Mammary epithelial cell (primary cell): ENCODE measurements at regions of chr1 and their contacts with region 1.

Region 1: DNA sequence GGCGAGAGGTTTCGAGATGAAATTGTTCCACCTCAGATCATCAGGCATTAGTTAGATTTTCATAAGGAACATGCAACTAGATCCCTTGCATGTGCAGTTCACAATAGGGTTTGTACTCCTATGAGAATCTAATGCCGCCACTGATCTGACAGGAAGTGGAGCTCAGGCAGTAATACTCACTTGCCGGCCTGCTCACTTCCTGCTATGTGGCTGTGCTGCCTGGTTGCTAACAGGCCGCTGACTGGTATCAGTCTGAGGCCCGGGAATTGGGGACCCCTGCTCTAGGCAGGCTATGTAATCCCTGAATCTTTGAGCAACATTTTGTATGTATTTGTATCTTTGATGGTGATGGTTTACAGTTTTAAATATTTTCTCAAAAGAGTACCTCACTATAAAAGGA is 32.5 kb downstream of the XKR8 start:
- DNase-seq: no peak
- H3K4me3 ChIP-seq: no peak overlapping the region
- H3K27ac ChIP-seq: no peak overlapping the region
- H3K4me1 ChIP-seq: no peaks in the 10 kb centered on the region
- H3K27me3 ChIP-seq: no peaks in the 10 kb centered on the region
- CTCF ChIP-seq: no peak

Region 2: DNA sequence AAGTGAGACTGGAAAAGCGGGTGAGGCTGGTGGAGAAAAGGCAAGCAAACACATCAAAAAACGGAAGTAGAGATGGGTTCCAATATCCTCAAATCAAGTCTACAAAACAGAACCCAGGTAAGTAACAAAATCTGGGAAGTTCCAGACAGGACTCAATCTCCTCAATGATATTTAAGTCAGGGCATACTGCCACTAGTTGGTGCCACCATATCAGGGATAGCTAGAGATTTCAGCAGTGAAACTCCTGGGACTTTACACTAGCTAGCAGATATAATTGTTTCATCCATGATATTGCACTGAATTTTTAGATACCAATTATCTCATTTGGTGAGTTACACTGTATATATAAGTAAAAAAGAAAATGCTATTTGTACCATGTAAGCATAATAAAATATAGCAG is 44.2 kb after region 1 on chr1:
- CTCF ChIA-PET with region 1: no interaction called
- dilution Hi-C with region 1: loop called (anchors 5 kb)
- in situ Hi-C with region 1: no loop called
- intact Hi-C with region 1: no loop called
- DNase-seq: no peak
- H3K4me3 ChIP-seq: no peak overlapping the region
- H3K27ac ChIP-seq: no peak overlapping the region
- H3K4me1 ChIP-seq: no peaks in the 10 kb centered on the region
- H3K27me3 ChIP-seq: no peaks in the 10 kb centered on the region
- CTCF ChIP-seq: peak in 1 of 2 donors; percentile 38

Region 3: GRCh38 chr1:28190337-28190979 is 198.2 kb after region 1 on chr1:
- CTCF ChIA-PET with region 1: no interaction called
- dilution Hi-C with region 1: no loop called
- in situ Hi-C with region 1: no loop called
- intact Hi-C with region 1: no loop called
- DNase-seq: no peak
- H3K4me3 ChIP-seq: no peak overlapping the region
- H3K27ac ChIP-seq: no peak overlapping the region
- H3K4me1 ChIP-seq: peaks cover 26% of the 10 kb centered on the region
- H3K27me3 ChIP-seq: no peaks in the 10 kb centered on the region
- CTCF ChIP-seq: no peak

Region 4: DNA sequence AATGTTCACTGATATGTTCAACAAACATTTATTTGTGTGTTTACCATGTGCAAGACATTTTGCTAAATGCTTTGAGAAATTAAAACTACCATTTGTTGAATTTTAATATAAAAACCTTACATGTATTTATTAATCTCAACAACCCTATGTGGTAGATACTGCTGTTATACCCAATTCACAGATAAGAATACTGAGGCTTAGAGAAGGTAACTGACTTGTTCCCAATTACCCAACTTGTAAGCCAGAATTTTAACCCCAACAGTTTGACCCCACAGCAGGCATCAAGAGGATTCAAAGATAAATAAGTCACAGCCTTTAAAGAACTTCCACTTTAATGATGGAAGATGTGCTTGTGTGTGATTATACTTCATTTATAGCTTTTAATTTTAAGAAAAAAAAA is 236.8 kb after region 1 on chr1:
- CTCF ChIA-PET with region 1: no interaction called
- dilution Hi-C with region 1: loop called (anchors 5 kb)
- in situ Hi-C with region 1: no loop called
- intact Hi-C with region 1: no loop called
- DNase-seq: no peak
- H3K4me3 ChIP-seq: no peak overlapping the region
- H3K27ac ChIP-seq: no peak overlapping the region
- H3K4me1 ChIP-seq: no peaks in the 10 kb centered on the region
- H3K27me3 ChIP-seq: no peaks in the 10 kb centered on the region
- CTCF ChIP-seq: no peak

Region 5: DNA sequence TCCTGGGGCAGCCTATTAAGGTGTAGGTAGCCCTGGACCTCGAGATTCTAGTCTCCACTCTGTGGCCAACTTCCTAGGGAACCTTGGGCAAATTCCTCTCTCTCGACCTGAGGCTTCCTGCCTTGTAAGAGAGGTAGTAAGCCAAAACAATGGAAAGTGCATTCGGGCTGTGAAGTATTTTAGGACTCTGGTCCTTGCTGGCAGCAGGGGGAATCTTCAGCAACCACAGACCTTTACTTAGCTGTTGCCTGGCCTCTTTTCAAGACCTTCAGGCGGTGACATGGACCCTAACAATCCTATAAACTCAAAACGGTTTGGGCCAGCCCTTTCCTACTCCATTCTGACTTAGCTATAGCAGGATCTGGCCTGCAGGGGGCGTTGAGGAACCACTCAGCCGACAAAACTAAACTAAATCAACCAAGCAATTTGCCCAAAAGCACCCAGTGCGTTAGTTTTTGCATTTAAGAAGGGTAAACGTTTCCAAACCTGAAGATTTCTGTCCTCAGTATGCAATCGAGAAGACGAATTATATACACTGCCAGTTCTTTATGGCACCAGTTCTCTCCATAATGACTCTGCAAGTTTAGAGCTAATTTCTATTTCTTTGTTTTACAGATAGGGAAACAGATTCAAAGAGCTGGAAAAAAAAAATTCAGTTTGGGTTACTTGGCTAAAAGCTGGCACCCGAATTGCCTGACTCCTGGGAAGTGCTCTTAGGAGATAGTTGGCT is 256.2 kb after region 1 on chr1:
- CTCF ChIA-PET with region 1: no interaction called
- dilution Hi-C with region 1: no loop called
- in situ Hi-C with region 1: no loop called
- intact Hi-C with region 1: no loop called
- DNase-seq: peak; percentile 68
- H3K4me3 ChIP-seq: peak overlapping the region in 2 of 3 experiments; percentile 17 to 29
- H3K27ac ChIP-seq: peak overlapping the region; percentile 56
- H3K4me1 ChIP-seq: peaks cover 40% of the 10 kb centered on the region
- H3K27me3 ChIP-seq: no peaks in the 10 kb centered on the region
- CTCF ChIP-seq: peak; percentile 92 to 95